Activated CD4-positive, alpha-beta memory T cell treated with anti-CD3 and anti-CD28 coated beads for 36 hours (primary cell): ENCODE measurements at regions of chr4 and their contacts with region 1.

Region 1: DNA sequence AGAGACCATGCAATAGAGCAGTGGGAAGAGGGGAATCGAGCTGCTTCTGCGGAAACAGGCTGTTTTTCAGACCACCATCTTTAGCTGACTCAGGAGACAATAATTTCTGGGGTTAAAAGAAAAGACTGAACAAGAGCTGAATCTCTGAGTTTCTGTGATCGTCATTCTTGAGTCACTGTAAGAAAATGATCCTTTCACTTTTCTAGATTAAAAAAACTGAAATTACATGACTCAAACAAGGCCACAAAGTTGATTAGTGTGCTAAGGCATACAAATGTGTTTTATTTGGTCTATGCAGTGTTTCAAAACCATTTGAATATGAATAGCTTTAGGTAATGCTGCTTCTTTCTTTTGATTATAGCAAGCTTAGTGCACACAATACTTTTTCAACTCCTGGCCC is 194.4 kb upstream of the RPL34 start:
- DNase-seq: no peak
- H3K4me3 Mint-ChIP-seq: no peak overlapping the region
- H3K27ac Mint-ChIP-seq: no peak overlapping the region
- H3K4me1 Mint-ChIP-seq: peaks cover 22% of the 10 kb centered on the region
- H3K27me3 Mint-ChIP-seq: peaks cover 12% of the 10 kb centered on the region

Region 2: GRCh38 chr4:108210989-108211835 is 214.8 kb before region 1 on chr4:
- CTCF ChIA-PET with region 1: no interaction called
- POLR2A ChIA-PET with region 1: no interaction called
- intact Hi-C with region 1: loop called (anchors 5 kb)
- DNase-seq: no peak
- H3K4me3 Mint-ChIP-seq: no peak overlapping the region
- H3K27ac Mint-ChIP-seq: no peak overlapping the region
- H3K4me1 Mint-ChIP-seq: peaks cover 9% of the 10 kb centered on the region
- H3K27me3 Mint-ChIP-seq: no peaks in the 10 kb centered on the region

Region 3: DNA sequence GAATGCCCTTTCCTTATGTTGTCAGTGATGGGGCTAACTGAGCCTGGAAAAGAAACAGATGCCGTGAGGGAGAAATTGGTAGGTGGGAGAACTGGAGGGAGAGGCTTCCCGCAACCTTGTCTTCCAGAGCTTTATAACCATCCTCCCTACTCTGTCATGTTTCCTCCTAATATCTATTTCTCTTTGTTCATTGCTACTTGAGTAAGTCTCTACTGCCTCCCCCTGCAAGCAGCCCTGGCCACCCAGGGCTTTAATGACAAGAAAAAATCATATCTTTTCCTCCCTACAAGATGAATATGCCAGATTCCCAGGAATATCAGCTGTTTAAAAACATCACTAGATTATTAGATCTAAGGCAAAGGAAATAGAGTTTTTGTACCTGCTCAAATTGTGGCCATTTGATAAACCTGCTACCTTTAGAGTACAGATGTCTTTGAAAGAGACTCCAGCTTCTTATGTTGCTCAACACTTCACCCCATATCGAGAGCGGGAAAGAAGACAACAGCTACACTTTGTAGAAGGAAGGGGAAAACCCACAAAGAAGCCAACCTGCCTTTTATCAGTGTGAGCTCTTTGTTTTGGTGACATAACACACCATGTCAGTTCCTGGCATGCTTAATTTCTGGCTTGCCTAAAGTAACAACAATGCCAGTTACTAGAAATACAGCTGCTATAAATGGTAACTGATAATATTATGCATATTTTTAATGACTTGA is 70.6 kb before region 1 on chr4:
- CTCF ChIA-PET with region 1: no interaction called
- POLR2A ChIA-PET with region 1: no interaction called
- intact Hi-C with region 1: loop called (anchors 2 kb)
- DNase-seq: peak; percentile 24
- H3K4me3 Mint-ChIP-seq: no peak overlapping the region
- H3K27ac Mint-ChIP-seq: peak overlapping the region; percentile 55
- H3K4me1 Mint-ChIP-seq: peaks cover 52% of the 10 kb centered on the region
- H3K27me3 Mint-ChIP-seq: no peaks in the 10 kb centered on the region

Region 4: GRCh38 chr4:108483079-108483478 is 57.1 kb after region 1 on chr4:
- CTCF ChIA-PET with region 1: no interaction called
- POLR2A ChIA-PET with region 1: no interaction called
- intact Hi-C with region 1: loop called (anchors 2 kb)
- DNase-seq: peak; percentile 64
- H3K4me3 Mint-ChIP-seq: peak overlapping the region; percentile 17
- H3K27ac Mint-ChIP-seq: no peak overlapping the region
- H3K4me1 Mint-ChIP-seq: peaks cover 27% of the 10 kb centered on the region
- H3K27me3 Mint-ChIP-seq: no peaks in the 10 kb centered on the region